ENCODE measurements at regions of chr9 and their contacts with region 1.

Region 1: DNA sequence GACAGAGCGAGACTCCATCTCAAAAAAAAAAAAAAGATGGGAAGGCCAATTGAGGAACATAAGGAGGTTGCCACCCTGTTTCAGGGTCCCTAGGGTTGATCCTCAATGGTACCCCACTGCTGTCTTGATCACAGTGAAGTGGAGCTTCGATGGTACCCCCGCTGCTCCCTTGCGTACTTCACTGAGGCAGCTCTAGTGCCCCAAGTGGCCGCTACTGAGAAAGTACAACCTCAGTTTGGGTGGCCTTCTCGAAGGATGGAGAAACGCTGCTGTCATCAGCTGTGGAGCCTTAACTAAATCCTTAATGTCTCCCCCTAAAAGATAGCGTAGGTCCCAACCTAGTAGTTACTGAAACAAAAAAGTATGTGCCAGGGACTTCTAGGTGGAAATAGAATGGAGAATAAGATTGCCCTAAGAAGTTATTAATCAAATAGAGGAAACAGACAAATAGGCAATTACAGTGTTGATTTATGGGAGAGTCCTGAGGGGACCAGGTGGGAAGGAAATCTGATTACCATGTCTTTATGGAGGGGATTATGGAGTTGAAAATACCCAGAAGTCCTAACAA is 6.3 kb downstream of the TESK1 start:
- DNase-seq: no peak

Region 2: GRCh38 chr9:35646533-35647265 is 35.4 kb after region 1 on chr9:
- intact Hi-C with region 1: loop called in 1 of 2 experiments (anchors 5 kb)
- DNase-seq: peak; percentile 98

Region 3: DNA sequence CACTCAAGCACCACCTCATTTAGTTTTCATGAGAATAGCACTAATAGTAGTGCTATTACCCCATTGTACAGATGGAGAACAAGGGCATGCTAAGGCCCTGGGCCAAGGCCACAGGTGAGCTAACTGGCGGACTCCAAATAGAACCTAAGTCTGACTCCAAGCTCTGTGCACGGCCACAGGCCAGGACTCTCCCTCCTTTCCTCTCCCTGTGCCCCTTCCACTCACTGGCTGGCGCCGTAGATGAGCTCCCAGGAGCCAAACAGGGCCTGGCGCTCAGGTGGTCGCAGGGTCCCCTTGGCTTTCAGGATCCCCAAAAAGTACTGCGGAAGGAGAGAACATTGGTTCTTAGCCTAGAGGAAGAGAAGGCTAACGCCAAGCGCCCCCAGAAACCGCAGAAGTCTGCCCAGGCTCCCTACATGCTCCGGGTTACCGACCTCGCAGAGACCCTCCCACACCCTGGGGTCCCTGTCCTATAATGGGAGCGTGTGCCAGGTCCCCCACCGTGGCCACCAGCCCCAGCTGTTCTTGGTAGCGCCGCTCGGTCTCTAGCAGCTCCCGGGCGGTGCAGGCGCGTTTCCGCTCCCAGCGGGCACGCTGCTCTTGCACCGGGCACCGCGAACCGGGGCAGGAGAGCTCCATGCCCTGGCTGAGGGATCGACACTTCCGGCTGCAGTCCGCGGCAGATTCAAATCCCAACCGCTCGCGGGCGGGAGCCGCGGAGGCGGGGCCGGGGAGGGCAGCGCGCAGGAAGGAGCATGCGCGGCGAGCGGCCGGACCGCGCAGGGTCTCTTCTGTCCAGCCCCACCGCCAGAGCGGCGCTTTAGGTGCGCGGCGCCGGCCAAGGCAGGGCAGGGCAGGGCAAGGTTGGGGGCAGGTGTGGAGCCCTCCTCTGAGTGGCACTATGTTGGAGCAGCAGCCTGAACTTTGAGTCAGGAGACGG is 53.5 kb after region 1 on chr9 and contains the start of gene ARHGEF39:
- intact Hi-C with region 1: no loop called
- DNase-seq: peak; percentile 93
- total RNA-seq, gene ARHGEF39: 0.29 to 0.46 TPM

Region 4: DNA sequence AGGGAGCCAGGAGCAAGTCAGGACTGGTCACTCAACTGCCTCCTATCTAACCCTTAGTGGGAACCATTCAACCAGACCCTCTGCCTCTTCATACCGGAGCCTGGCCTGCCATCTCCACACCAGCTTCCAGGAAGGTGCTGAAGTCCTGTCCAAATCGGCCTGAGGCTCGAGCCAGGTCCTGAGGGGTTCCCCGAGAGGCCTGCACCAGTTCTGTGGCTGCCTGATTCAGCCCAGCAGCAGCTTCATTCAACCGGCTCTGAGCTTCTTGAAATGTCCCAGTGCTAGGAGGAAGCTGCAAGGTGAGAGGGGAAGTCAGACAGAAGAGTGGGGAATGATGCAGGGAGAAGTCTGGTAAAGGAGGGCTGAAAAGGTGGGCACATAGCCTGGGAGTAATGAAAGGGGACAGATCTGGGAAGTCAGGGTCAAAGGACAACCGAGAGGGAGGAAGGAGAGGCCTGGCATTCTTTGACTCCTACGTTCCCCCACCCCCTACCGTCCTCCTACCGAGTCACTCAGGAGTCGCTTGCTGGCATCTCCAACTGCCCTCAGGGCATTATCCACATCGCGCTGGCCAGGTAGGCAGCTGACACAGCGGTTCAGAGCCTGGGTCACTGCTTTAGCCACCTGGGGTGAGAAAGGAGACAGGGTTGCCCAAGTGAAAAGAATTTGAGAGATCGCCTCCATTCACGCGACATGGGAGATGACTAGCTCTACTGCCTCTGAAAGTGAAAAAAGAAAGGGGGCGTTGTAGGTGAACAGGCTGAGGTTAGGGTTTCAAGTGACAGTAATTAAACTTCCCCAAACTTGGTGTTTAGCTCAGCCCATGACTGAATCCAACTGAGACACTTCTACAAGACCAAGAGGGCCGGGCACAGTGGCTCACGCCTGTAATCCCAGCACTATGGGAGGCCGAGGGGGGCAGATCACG is 100.5 kb after region 1 on chr9:
- intact Hi-C with region 1: no loop called
- DNase-seq: peak; percentile 40

Region 5: GRCh38 chr9:35859990-35860339 is 248.7 kb after region 1 on chr9:
- intact Hi-C with region 1: no loop called
- DNase-seq: peak; percentile 49